CD8-positive, alpha-beta memory T cell (primary cell): ENCODE measurements at regions of chr2 and their contacts with region 1.

Region 1: DNA sequence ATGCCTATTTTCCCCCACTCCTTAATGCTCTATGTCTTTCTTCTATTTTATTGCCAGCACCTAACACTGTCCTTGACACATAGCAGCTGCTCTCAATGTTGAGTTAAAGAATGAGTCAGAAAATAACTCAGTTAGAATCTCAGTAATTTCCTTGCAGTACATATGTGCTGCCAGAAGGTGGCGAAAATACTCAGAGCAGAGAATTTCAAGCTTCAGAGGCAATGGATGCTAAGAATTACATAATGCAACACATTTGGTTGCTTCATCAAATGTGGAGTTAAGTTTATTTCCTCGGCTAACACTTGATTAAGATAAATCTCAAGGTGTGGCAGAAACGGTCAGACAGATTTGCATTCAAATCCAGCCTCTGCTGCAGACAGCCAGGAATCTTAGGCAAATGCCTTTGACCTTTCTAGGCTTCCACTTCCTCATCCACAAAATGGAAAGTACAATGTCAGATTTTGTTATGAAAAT is 105.6 kb downstream of the VSNL1 start:
- DNase-seq: peak in 2 of 5 donors; percentile 11 to 13
- H3K4me3 ChIP-seq: no peak overlapping the region
- H3K4me3 Mint-ChIP-seq: no peak overlapping the region
- H3K27ac ChIP-seq: no peak overlapping the region
- H3K27ac Mint-ChIP-seq: no peak overlapping the region
- H3K4me1 ChIP-seq: no peaks in the 10 kb centered on the region
- H3K4me1 Mint-ChIP-seq: no peaks in the 10 kb centered on the region
- H3K27me3 ChIP-seq: no peaks in the 10 kb centered on the region
- H3K27me3 Mint-ChIP-seq: no peaks in the 10 kb centered on the region

Region 2: DNA sequence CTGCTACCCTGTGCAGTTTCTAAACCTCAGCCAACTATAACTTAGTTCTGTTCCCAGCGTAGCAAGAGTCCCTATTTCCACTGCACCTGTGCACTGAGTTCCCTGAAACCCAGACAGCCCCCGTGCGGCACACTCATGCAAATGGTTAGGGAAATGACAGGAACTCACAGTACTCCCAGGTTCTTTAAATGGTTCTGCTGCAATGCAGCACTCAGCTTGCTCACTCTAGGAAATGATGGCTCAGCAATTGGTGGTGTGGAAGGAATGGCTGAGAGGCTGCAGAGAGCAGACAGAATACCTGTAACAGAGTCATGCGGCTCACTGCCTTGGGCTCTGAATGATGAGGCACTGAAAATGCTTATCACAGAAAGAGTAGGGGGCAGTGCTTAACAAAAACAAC is 270.9 kb before region 1 on chr2:
- CTCF ChIA-PET with region 1: no interaction called
- POLR2A ChIA-PET with region 1: no interaction called
- DNase-seq: no peak
- H3K4me3 ChIP-seq: no peak overlapping the region
- H3K4me3 Mint-ChIP-seq: no peak overlapping the region
- H3K27ac ChIP-seq: no peak overlapping the region
- H3K27ac Mint-ChIP-seq: no peak overlapping the region
- H3K4me1 ChIP-seq: no peaks in the 10 kb centered on the region
- H3K4me1 Mint-ChIP-seq: no peaks in the 10 kb centered on the region
- H3K27me3 ChIP-seq: no peaks in the 10 kb centered on the region
- H3K27me3 Mint-ChIP-seq: no peaks in the 10 kb centered on the region

Region 3: GRCh38 chr2:17672583-17673317 is 26.6 kb after region 1 on chr2:
- CTCF ChIA-PET with region 1: interaction called, 31 read pairs
- POLR2A ChIA-PET with region 1: no interaction called
- DNase-seq: no peak
- H3K4me3 ChIP-seq: no peak overlapping the region
- H3K4me3 Mint-ChIP-seq: no peak overlapping the region
- H3K27ac ChIP-seq: no peak overlapping the region
- H3K27ac Mint-ChIP-seq: no peak overlapping the region
- H3K4me1 ChIP-seq: no peaks in the 10 kb centered on the region
- H3K4me1 Mint-ChIP-seq: peaks cover 0 to 10% (median 10%) of the 10 kb centered on the region in 3 donors
- H3K27me3 ChIP-seq: no peaks in the 10 kb centered on the region
- H3K27me3 Mint-ChIP-seq: no peaks in the 10 kb centered on the region

Region 4: GRCh38 chr2:17690776-17691175 is 44.7 kb after region 1 on chr2:
- CTCF ChIA-PET with region 1: no interaction called
- POLR2A ChIA-PET with region 1: no interaction called
- DNase-seq: no peak
- H3K4me3 ChIP-seq: no peak overlapping the region
- H3K4me3 Mint-ChIP-seq: no peak overlapping the region
- H3K27ac ChIP-seq: no peak overlapping the region
- H3K27ac Mint-ChIP-seq: no peak overlapping the region
- H3K4me1 ChIP-seq: no peaks in the 10 kb centered on the region
- H3K4me1 Mint-ChIP-seq: no peaks in the 10 kb centered on the region
- H3K27me3 ChIP-seq: no peaks in the 10 kb centered on the region
- H3K27me3 Mint-ChIP-seq: no peaks in the 10 kb centered on the region